Activated naive CD4-positive, alpha-beta T cell treated with anti-CD3 and anti-CD28 coated beads for 36 hours (primary cell): ENCODE measurements at regions of chr14 and their contacts with region 1.

Region 1: DNA sequence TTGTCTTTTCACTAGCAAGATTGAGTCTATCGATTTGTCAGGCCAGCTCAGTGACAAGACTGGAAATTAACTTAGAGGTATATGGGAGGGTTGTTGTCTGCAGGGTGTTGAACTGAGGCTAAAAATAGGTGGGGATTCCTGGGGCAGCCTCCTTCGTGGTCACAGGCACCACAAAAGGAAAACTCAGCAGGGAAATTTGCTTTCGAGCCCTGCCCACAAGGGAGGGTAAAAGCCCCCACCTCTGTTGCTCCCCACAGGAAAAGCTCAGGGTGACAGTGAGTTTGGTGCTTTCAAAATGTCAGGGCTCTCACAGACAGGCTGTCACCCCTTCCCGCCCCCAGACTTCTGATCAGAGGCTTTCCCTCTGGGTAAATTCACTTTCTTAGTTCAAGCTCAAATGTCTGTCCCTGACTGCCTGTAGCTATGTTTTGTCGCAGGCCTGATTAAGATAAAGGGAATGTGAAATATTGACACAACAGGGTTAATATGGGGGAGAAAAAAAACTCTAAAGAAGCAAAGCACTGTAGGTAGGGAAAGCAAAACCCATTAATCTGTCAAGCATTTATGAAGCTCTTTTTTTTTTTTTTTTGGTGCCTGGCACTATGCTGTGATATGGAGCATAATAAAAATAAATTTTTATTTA is 11.7 kb upstream of the NFKBIA start:
- DNase-seq: peak; percentile 89
- H3K4me3 Mint-ChIP-seq: peak overlapping the region; percentile 59
- H3K27ac Mint-ChIP-seq: peak overlapping the region; percentile 91
- H3K4me1 Mint-ChIP-seq: peaks cover 47% of the 10 kb centered on the region
- H3K27me3 Mint-ChIP-seq: no peaks in the 10 kb centered on the region

Region 2: GRCh38 chr14:34770901-34771300 is 645.3 kb before region 1 on chr14:
- CTCF ChIA-PET with region 1: interaction called, 13 read pairs
- intact Hi-C with region 1: no loop called
- DNase-seq: no peak
- H3K4me3 Mint-ChIP-seq: no peak overlapping the region
- H3K27ac Mint-ChIP-seq: no peak overlapping the region
- H3K4me1 Mint-ChIP-seq: no peaks in the 10 kb centered on the region
- H3K27me3 Mint-ChIP-seq: no peaks in the 10 kb centered on the region

Region 3: DNA sequence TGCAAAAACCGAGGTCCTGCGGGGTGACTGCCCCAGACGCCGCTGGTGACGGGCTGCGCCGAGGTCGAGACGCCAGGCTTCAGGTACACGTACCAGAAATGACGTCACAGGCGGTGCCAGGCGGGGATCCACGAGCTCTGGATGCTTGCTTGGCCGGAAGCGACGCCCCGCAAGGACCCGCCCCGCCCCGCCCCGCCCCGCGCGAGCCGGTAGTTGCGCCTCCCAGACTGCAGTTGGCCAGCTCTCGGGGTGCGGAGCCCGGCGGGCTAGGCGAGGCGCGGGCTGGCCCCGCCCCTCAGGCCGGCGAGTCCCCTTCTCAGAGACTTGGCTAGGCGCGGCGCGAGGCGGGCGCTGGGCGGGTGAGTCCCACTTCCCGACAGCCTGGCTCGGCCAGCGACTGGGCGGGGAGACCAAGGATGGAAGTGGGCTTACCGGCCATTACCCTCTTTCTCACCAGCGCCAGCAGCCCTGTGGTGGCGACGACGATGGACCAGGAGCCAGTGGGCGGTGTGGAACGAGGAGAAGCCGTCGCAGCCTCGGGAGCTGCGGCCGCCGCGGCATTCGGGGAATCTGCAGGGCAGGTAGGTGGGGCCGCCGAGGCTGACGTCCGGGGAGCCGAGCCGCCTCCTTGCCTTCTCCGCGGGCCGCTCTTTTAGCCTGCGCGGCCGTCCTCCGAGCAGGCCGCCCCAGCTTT is 370.0 kb before region 1 on chr14 and contains the start of gene FAM177A1:
- CTCF ChIA-PET with region 1: interaction called, 5 read pairs
- intact Hi-C with region 1: loop called (anchors 1 kb)
- DNase-seq: peak; percentile 99
- H3K4me3 Mint-ChIP-seq: peak within 1 kb of the TSS; percentile 89
- H3K27ac Mint-ChIP-seq: peak within 1 kb of the TSS; percentile 98
- H3K4me1 Mint-ChIP-seq: peaks cover 25% of the 10 kb centered on the region
- H3K27me3 Mint-ChIP-seq: no peaks in the 10 kb centered on the region
- total RNA-seq, gene FAM177A1: 55.0 to 58.5 TPM

Region 4: GRCh38 chr14:35229495-35230089 is 186.6 kb before region 1 on chr14:
- CTCF ChIA-PET with region 1: interaction called, 70 read pairs
- intact Hi-C with region 1: no loop called
- DNase-seq: no peak
- H3K4me3 Mint-ChIP-seq: no peak overlapping the region
- H3K27ac Mint-ChIP-seq: peak overlapping the region; percentile 37
- H3K4me1 Mint-ChIP-seq: peaks cover 23% of the 10 kb centered on the region
- H3K27me3 Mint-ChIP-seq: no peaks in the 10 kb centered on the region

Region 5: GRCh38 chr14:35355981-35356841 is 60.0 kb before region 1 on chr14:
- CTCF ChIA-PET with region 1: no interaction called
- intact Hi-C with region 1: loop called (anchors 1 kb)
- DNase-seq: peak; percentile 86
- H3K4me3 Mint-ChIP-seq: peak overlapping the region; percentile 12
- H3K27ac Mint-ChIP-seq: peak overlapping the region; percentile 91
- H3K4me1 Mint-ChIP-seq: peaks cover 46% of the 10 kb centered on the region
- H3K27me3 Mint-ChIP-seq: no peaks in the 10 kb centered on the region

Region 6: GRCh38 chr14:35808076-35808652 is 391.9 kb after region 1 on chr14:
- CTCF ChIA-PET with region 1: no interaction called
- intact Hi-C with region 1: loop called (anchors 5 kb)
- DNase-seq: peak; percentile 61
- H3K4me3 Mint-ChIP-seq: peak overlapping the region; percentile 98
- H3K27ac Mint-ChIP-seq: peak overlapping the region; percentile 86
- H3K4me1 Mint-ChIP-seq: peaks cover 28% of the 10 kb centered on the region
- H3K27me3 Mint-ChIP-seq: no peaks in the 10 kb centered on the region